HCT116 (cell line): ENCODE measurements at regions of chr7 and their contacts with region 1.

Region 1: DNA sequence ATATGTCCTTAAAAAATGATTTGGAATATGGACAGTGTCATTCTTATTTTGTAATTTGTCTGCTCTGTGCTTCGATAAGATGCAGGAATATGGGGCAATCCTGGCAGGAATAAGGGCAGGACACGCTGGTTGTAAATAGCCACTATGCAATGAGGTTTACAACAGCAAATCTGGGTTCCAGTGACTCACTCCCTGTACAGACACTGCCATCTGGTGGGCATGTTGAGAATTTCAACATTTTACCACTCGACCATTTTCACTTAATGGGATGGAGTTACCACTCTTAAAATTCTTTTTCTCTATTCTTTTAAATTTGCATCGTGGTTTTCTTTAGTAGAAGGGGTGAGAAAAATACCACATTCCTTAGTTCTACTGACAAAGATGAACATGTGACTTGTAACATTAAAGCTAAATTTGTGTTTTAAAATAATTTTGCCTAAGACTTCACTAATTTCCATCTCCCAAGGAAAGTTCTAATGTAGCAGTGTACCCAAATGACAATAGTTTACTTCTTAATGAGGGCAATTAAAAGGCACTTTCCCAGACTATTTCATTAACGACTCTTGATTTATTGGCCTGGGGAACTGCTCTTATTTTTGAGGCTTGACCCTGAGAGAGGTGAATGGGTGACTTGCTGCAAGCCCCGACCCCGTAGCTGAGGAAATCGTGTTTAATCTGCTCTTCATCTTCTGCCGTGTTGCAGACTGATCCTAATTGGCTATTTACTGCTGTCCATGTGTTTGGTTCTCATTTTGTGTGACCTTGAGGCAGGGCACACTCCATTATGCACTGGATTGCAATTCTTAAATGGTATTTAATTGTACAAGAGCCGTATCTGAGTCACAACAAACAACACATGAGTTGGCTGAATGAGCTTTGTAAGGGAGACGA is 173.6 kb upstream of the IMMP2L start:
- DNase-seq: peak; percentile 52
- ATAC-seq: peak; percentile 80
- H3K4me3 ChIP-seq: no peak overlapping the region
- H3K27ac ChIP-seq: no peak overlapping the region
- H3K4me1 ChIP-seq: no peaks in the 10 kb centered on the region
- H3K27me3 ChIP-seq: no peaks in the 10 kb centered on the region
- CTCF ChIP-seq: peak; percentile 59 to 88 (median 64)
- POLR2A ChIP-seq: no peak
- RAD21 ChIP-seq: peak; percentile 89

Region 2: GRCh38 chr7:111053035-111053434 is 682.9 kb before region 1 on chr7:
- CTCF ChIA-PET with region 1: no interaction called
- POLR2A ChIA-PET with region 1: no interaction called
- RAD21 ChIA-PET with region 1: no interaction called
- intact Hi-C with region 1: no loop called
- DNase-seq: no peak
- ATAC-seq: no peak
- H3K4me3 ChIP-seq: no peak overlapping the region
- H3K27ac ChIP-seq: no peak overlapping the region
- H3K4me1 ChIP-seq: no peaks in the 10 kb centered on the region
- H3K27me3 ChIP-seq: no peaks in the 10 kb centered on the region
- CTCF ChIP-seq: no peak
- POLR2A ChIP-seq: no peak
- RAD21 ChIP-seq: no peak

Region 3: GRCh38 chr7:111089822-111090426 is 646.0 kb before region 1 on chr7:
- CTCF ChIA-PET with region 1: no interaction called
- POLR2A ChIA-PET with region 1: no interaction called
- RAD21 ChIA-PET with region 1: no interaction called
- intact Hi-C with region 1: loop called (anchors 5 kb)
- DNase-seq: peak; percentile 34
- ATAC-seq: peak; percentile 52
- H3K4me3 ChIP-seq: no peak overlapping the region
- H3K27ac ChIP-seq: no peak overlapping the region
- H3K4me1 ChIP-seq: no peaks in the 10 kb centered on the region
- H3K27me3 ChIP-seq: no peaks in the 10 kb centered on the region
- CTCF ChIP-seq: peak; percentile 30 to 79 (median 67); a peak in 5 of 6 replicates
- POLR2A ChIP-seq: no peak
- RAD21 ChIP-seq: peak; percentile 66

Region 4: DNA sequence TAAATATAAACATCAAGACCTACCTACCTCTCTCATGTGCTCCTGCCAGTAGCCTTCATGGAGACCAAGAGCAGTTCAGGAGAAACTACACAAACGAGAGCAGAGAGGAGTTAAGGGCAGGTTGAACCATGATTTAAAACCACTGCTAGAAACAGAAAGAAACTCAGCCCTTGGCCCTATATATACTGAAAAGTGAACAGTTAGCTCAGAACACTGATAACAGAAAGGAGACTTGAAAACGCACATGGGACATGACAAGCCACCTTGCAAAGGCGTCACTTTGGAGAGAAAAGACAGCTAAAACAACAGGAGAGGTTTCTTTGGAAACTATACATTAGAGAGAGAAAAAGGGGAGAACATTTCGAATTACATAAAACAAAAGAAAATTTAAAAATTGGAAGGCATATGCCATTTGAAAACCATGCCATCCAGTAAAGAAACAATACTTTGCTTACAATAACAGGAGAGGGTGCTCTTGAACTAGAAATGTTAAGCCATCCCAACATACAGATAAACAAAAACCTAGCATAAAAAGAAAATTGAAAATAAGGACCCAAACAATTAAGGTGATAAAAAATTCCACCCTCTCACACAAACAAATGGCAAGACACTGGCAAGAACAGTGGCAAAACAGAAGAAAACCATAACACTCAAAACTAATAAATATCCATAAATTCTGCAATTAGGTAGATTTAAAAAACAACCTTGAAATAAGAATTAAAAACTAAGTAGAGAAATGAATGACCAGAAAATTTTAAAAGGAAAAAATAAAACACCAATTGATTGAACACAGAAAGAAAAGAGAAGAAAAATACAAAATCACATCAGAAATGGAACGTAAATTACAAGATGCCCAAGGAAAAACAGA is 406.3 kb before region 1 on chr7:
- CTCF ChIA-PET with region 1: no interaction called
- POLR2A ChIA-PET with region 1: no interaction called
- RAD21 ChIA-PET with region 1: no interaction called
- intact Hi-C with region 1: loop called (anchors 5 kb)
- DNase-seq: no peak
- ATAC-seq: no peak
- H3K4me3 ChIP-seq: no peak overlapping the region
- H3K27ac ChIP-seq: no peak overlapping the region
- H3K4me1 ChIP-seq: no peaks in the 10 kb centered on the region
- H3K27me3 ChIP-seq: no peaks in the 10 kb centered on the region
- CTCF ChIP-seq: 0 out of 6 replicates have a peak, but pooled peaks of 1 of the 3 experiments have one; percentile 6
- POLR2A ChIP-seq: no peak
- RAD21 ChIP-seq: peak; percentile 38

Region 5: DNA sequence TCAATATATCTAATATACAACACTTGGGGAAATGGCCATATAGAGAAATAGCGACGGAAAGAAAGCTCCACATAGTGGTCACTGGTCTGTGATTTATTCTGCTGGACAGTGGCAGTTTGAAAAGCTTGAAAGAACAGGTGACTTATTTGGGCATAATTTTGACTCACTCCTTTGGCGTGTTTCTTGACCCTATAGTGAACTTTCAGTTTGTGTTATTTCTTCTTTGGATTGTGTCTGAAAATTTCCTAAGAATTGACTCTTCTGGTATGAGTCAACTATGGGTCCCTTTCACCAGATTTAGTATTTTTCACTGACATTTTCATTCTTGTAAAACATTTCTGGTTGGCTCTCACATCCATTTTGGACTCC is 147.9 kb before region 1 on chr7:
- CTCF ChIA-PET with region 1: no interaction called
- POLR2A ChIA-PET with region 1: no interaction called
- RAD21 ChIA-PET with region 1: no interaction called
- intact Hi-C with region 1: no loop called
- DNase-seq: no peak
- ATAC-seq: no peak
- H3K4me3 ChIP-seq: no peak overlapping the region
- H3K27ac ChIP-seq: no peak overlapping the region
- H3K4me1 ChIP-seq: no peaks in the 10 kb centered on the region
- H3K27me3 ChIP-seq: no peaks in the 10 kb centered on the region
- CTCF ChIP-seq: no peak
- POLR2A ChIP-seq: no peak
- RAD21 ChIP-seq: no peak

Region 6: GRCh38 chr7:112049555-112050249 is 313.8 kb after region 1 on chr7:
- CTCF ChIA-PET with region 1: no interaction called
- POLR2A ChIA-PET with region 1: no interaction called
- RAD21 ChIA-PET with region 1: no interaction called
- intact Hi-C with region 1: no loop called
- DNase-seq: no peak
- ATAC-seq: no peak
- H3K4me3 ChIP-seq: no peak overlapping the region
- H3K27ac ChIP-seq: no peak overlapping the region
- H3K4me1 ChIP-seq: no peaks in the 10 kb centered on the region
- H3K27me3 ChIP-seq: no peaks in the 10 kb centered on the region
- CTCF ChIP-seq: no peak
- POLR2A ChIP-seq: no peak
- RAD21 ChIP-seq: no peak

Region 7: GRCh38 chr7:112336936-112337576 is 601.1 kb after region 1 on chr7:
- CTCF ChIA-PET with region 1: no interaction called
- POLR2A ChIA-PET with region 1: no interaction called
- RAD21 ChIA-PET with region 1: no interaction called
- intact Hi-C with region 1: no loop called
- DNase-seq: no peak
- ATAC-seq: no peak
- H3K4me3 ChIP-seq: no peak overlapping the region
- H3K27ac ChIP-seq: no peak overlapping the region
- H3K4me1 ChIP-seq: no peaks in the 10 kb centered on the region
- H3K27me3 ChIP-seq: no peaks in the 10 kb centered on the region
- CTCF ChIP-seq: no peak
- POLR2A ChIP-seq: no peak
- RAD21 ChIP-seq: no peak